Activated B cell treated with CpG ODN at 0.5 μM for 24 hours (primary cell): ENCODE measurements at regions of chr2 and their contacts with region 1.

Region 1: DNA sequence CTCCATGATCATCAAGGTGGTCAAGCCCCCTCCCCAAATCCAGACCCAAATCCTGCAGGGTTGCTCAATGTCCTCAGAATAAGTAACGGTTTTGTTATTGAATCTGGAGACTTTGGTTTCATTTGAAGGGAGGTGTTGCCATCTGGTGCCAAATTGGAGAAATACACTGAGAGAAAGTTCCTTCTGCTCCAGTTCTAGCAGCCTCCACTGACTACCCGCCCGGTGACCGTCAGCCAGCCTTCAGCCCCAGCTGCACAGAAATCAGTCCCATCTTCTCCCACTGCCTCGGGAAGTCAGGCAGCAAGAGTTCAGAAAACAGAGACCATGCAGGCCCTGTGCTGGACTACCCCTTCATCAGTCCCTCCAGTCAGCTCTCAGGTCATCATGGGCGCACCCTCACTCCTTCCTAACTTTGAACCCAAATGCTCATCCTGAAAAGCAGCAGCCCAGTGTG is 38.7 kb downstream of the PKDCC start:
- DNase-seq: no peak
- ATAC-seq: peak; percentile 71
- H3K4me3 Mint-ChIP-seq: no peak overlapping the region
- H3K27ac Mint-ChIP-seq: no peak overlapping the region
- H3K4me1 Mint-ChIP-seq: peaks cover 5% of the 10 kb centered on the region
- H3K27me3 Mint-ChIP-seq: peaks cover 8% of the 10 kb centered on the region
- CTCF ChIP-seq: peak; percentile 58

Region 2: DNA sequence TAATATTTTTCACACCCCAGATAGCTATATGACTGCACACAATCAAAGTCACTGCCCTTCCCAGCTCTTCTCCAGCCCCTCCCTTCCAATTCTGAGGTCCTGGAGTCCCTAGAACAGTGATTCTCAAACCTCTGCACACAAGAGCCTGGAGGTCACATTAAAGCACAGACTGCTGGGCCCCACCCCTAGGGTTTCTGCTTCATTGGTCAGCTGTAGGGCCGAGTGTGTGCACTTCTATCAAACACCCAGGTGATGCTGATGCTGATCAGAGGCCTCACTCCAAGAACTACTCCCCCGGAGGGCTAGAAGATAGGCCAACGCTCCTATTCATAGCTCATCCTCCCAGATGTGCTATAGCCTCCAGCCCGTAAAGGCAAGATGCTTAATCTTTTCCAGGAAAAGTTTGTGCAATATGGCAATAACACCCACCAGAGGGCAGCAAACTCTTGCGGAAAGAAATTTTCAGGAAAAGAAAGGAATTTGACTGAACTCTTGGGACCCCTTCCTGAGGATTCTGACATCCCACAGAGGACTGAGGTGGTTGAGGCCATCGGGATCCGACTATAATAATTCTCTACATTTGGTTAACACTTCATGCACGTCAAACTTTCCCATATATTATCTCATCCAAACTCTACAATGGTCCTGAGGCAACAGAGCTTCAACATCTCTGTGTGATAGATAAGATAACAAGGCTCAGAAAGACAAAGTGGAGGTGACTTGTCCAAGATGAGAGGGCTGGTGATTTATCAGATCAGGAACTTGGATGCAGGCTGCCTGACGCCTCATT is 232.9 kb before region 1 on chr2:
- CTCF ChIA-PET with region 1: interaction called, 22 read pairs
- POLR2A ChIA-PET with region 1: no interaction called
- intact Hi-C with region 1: loop called (anchors 1 kb)
- DNase-seq: no peak
- ATAC-seq: no peak
- H3K4me3 Mint-ChIP-seq: no peak overlapping the region
- H3K27ac Mint-ChIP-seq: no peak overlapping the region
- H3K4me1 Mint-ChIP-seq: no peaks in the 10 kb centered on the region
- H3K27me3 Mint-ChIP-seq: peaks cover 26% of the 10 kb centered on the region
- CTCF ChIP-seq: no peak

Region 3: GRCh38 chr2:41955316-41956043 is 131.0 kb before region 1 on chr2:
- CTCF ChIA-PET with region 1: no interaction called
- POLR2A ChIA-PET with region 1: no interaction called
- intact Hi-C with region 1: loop called (anchors 10 kb)
- DNase-seq: no peak
- ATAC-seq: peak; percentile 54
- H3K4me3 Mint-ChIP-seq: no peak overlapping the region
- H3K27ac Mint-ChIP-seq: peak overlapping the region; percentile 51
- H3K4me1 Mint-ChIP-seq: peaks cover 38% of the 10 kb centered on the region
- H3K27me3 Mint-ChIP-seq: peaks cover 2% of the 10 kb centered on the region
- CTCF ChIP-seq: no peak

Region 4: GRCh38 chr2:42183775-42184174 is 97.2 kb after region 1 on chr2:
- CTCF ChIA-PET with region 1: no interaction called
- POLR2A ChIA-PET with region 1: no interaction called
- intact Hi-C with region 1: no loop called
- DNase-seq: no peak
- ATAC-seq: no peak
- H3K4me3 Mint-ChIP-seq: no peak overlapping the region
- H3K27ac Mint-ChIP-seq: peak overlapping the region; percentile 14
- H3K4me1 Mint-ChIP-seq: peaks cover 77% of the 10 kb centered on the region
- H3K27me3 Mint-ChIP-seq: no peaks in the 10 kb centered on the region
- CTCF ChIP-seq: no peak

Region 5: DNA sequence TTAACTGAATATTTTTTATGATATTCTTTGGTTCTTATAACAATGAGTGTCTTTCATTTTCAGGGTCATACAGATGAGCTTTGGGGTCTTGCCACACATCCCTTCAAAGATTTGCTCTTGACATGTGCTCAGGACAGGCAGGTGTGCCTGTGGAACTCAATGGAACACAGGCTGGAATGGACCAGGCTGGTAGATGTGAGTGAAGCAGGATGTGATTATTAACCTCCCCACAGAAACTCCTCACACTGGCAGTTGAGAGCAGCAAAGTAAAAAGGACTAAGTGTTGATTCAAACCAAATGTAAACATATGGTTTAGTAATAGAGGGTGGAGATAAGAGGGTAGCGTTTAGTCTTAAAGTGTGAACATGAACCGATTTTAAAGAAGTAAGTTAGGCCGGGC is 216.7 kb after region 1 on chr2:
- CTCF ChIA-PET with region 1: no interaction called
- POLR2A ChIA-PET with region 1: no interaction called
- intact Hi-C with region 1: no loop called
- DNase-seq: no peak
- ATAC-seq: no peak
- H3K4me3 Mint-ChIP-seq: no peak overlapping the region
- H3K27ac Mint-ChIP-seq: no peak overlapping the region
- H3K4me1 Mint-ChIP-seq: peaks cover under 1% of the 10 kb centered on the region
- H3K27me3 Mint-ChIP-seq: no peaks in the 10 kb centered on the region
- CTCF ChIP-seq: no peak